ENCODE measurements at regions of chr4 and their contacts with region 1.

Region 1: DNA sequence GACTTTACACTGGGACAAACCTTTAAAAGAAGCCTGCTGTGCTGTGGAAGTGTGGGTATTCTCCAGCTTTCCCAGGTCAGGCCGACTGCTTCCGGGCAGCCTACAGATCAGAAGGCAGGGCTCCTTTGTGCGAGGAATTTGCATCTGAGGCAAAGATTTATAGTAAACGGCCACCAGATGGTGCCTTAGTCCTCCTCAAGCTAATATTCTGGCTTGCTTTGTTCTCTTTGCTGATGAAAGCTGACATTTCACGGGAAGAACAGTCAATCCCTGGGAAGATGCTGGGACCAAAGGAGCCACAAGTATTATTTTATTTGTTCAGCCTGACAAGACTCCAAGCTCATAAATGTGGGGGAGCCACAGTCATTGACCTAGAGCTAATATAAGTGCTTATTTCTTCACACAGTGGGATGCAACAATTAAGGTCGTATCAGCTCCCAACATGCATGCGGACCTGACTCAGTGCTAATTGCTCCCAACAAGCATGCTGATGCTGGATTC is 120.7 kb upstream of the TRIM2 start:
- DNase-seq: peak in 13 of 14 experiments; percentile 18 to 81 (median 34)
- ATAC-seq: peak; percentile 51
- H3K4me3 ChIP-seq: no peak overlapping the region
- H3K4me3 Mint-ChIP-seq: no peak overlapping the region
- H3K27ac ChIP-seq: no peak overlapping the region
- H3K27ac Mint-ChIP-seq: peak overlapping the region; percentile 2
- H3K4me1 ChIP-seq: peaks cover 56% of the 10 kb centered on the region
- H3K4me1 Mint-ChIP-seq: peaks cover 45% of the 10 kb centered on the region
- H3K27me3 ChIP-seq: no peaks in the 10 kb centered on the region
- H3K27me3 Mint-ChIP-seq: no peaks in the 10 kb centered on the region
- CTCF ChIP-seq: peak; percentile 79

Region 2: GRCh38 chr4:152850377-152850776 is 233.1 kb before region 1 on chr4:
- CTCF ChIA-PET with region 1: interaction called, 10 read pairs
- POLR2A ChIA-PET with region 1: no interaction called
- intact Hi-C with region 1: loop called (anchors 1 kb)
- DNase-seq: peak in 9 of 14 experiments; percentile 11 to 71 (median 28)
- ATAC-seq: peak; percentile 56
- H3K4me3 ChIP-seq: no peak overlapping the region
- H3K4me3 Mint-ChIP-seq: no peak overlapping the region
- H3K27ac ChIP-seq: no peak overlapping the region
- H3K27ac Mint-ChIP-seq: no peak overlapping the region
- H3K4me1 ChIP-seq: no peaks in the 10 kb centered on the region
- H3K4me1 Mint-ChIP-seq: peaks cover 28% of the 10 kb centered on the region
- H3K27me3 ChIP-seq: no peaks in the 10 kb centered on the region
- H3K27me3 Mint-ChIP-seq: no peaks in the 10 kb centered on the region
- CTCF ChIP-seq: no peak

Region 3: DNA sequence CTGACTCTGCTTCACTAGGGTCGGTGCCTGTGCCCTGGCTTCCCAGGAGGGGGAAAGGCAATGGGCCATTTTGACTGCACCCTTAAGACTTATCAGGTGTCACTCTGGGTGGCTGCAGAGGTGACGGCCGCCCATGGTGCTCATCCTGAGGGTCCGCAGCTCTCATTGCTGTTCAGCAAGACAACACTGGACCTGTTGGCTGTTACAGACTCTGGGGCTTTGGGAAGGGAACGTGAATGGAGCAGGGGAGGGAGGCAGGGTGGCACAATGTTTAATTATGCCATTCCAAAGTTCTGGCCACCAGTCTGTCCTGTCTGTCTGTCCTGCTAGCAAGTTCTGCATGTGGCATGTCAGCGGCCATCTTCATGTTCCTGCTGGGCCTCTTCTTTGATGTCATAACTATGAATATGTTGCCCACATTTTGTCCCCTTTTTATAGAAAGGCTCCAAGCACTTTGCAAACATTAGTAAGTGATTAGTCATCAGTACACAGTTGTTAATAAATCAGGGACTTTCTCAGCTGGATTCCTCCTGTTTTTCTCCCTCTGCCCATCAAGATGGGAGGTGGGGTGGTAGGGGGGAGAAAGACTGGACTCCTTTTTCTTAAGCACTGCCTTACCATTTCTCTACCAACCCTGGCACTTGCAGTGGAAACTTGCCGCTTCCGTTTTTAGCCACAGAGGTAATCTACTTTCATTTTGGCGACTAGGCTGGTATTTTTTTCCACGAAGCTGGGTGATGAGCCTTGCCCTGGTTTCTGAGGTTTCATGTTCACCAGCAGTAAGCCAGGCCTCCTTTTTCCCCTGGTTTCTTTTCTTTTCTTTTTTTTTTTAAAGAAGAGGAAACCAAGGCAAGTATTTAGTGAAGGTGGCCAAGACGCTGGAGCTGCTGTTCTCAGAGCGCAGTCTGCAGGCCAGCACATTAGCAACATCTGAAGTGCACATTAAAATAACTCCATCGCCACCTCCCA is 32.1 kb after region 1 on chr4:
- CTCF ChIA-PET with region 1: interaction called, 77 read pairs
- POLR2A ChIA-PET with region 1: interaction called, 50 read pairs
- intact Hi-C with region 1: no loop called
- DNase-seq: peak; percentile 43 to 92 (median 62)
- ATAC-seq: peak; percentile 54
- H3K4me3 ChIP-seq: peak overlapping the region; percentile 20
- H3K4me3 Mint-ChIP-seq: no peak overlapping the region
- H3K27ac ChIP-seq: peak overlapping the region; percentile 66
- H3K27ac Mint-ChIP-seq: no peak overlapping the region
- H3K4me1 ChIP-seq: peaks cover 66% of the 10 kb centered on the region
- H3K4me1 Mint-ChIP-seq: peaks cover 15% of the 10 kb centered on the region
- H3K27me3 ChIP-seq: no peaks in the 10 kb centered on the region
- H3K27me3 Mint-ChIP-seq: no peaks in the 10 kb centered on the region
- CTCF ChIP-seq: no peak

Region 4: GRCh38 chr4:153318696-153319320 is 235.3 kb after region 1 on chr4:
- CTCF ChIA-PET with region 1: no interaction called
- POLR2A ChIA-PET with region 1: no interaction called
- intact Hi-C with region 1: loop called (anchors 2 kb)
- DNase-seq: peak in 7 of 14 experiments; percentile 3 to 66 (median 51)
- ATAC-seq: no peak
- H3K4me3 ChIP-seq: no peak overlapping the region
- H3K4me3 Mint-ChIP-seq: no peak overlapping the region
- H3K27ac ChIP-seq: no peak overlapping the region
- H3K27ac Mint-ChIP-seq: no peak overlapping the region
- H3K4me1 ChIP-seq: no peaks in the 10 kb centered on the region
- H3K4me1 Mint-ChIP-seq: no peaks in the 10 kb centered on the region
- H3K27me3 ChIP-seq: no peaks in the 10 kb centered on the region
- H3K27me3 Mint-ChIP-seq: peaks cover 3% of the 10 kb centered on the region
- CTCF ChIP-seq: peak; percentile 61

Measured in CD4-positive, alpha-beta T cell (primary cell).